ENCODE measurements at regions of chr15 and their contacts with region 1.

Region 1: DNA sequence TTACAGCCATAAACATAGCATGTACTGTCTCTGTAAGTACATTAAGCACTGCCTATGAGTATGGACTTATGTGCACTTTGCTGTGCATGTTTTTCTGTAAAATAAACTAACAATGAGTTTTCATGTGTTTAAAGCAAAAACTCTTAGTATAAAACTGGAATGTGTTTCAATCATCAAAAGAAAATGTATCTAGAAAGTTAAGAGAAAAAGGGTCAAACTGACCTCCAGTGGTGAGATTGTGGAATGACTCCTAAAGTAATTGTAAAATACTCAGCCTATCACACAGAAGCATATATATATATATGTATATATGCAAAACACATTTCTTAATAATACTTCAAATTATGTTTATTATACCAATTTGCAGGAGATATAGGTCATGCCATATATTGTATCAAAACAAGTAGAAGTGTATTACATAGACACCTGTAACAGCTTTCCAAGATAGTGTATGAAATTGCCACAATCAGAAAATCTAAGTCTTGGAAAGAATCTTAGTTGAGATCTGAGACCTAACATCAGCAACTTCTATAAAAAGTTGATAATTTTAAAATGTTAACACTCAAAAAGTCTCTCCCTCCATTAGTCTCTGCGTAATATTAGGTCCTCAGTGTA is 199.6 kb downstream of the FMN1 start:
- DNase-seq: no peak
- H3K4me3 Mint-ChIP-seq: no peak overlapping the region
- H3K27ac Mint-ChIP-seq: no peak overlapping the region
- H3K4me1 Mint-ChIP-seq: no peaks in the 10 kb centered on the region
- H3K27me3 Mint-ChIP-seq: peaks cover 12% of the 10 kb centered on the region

Region 2: DNA sequence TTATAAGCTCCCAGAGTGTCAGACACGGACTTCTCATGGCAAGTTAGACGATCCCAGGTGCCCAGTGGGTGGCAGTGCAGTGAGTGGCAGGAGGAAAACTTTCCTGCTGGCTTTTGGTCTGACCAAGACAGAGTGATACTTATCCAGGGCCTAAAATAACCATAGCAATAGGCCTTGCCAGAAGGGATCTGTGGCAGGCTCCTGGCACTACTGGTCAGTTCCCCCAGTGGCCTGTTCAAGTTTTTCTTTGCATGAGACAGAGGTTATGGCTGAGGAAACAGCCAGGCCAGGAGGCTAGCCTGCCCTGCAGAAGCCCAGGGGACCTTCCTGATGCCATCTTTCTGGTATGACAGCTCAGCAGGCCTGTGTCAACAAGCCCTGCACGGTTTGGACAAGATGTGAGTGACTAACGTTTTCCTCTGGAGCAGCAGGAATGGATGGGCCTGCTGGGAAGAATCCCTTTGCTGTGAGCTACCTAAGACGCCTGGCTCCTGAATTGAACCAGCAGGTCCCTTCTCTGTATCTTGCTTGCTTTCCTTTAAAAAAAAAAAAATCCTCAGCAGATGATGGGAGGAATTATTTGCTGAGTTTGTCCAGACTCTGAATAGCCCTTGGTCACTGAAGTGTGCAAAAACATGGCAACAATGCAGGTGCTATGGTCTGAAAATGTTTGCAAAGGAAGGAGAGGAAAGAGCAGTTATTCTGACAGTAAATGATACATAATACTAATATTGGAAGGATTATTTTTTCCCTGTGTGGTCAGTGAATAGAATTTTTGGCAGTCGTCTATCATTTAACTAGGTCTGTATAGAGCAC is 335.4 kb before region 1 on chr15:
- intact Hi-C with region 1: loop called (anchors 5 kb)
- DNase-seq: no peak
- H3K4me3 Mint-ChIP-seq: no peak overlapping the region
- H3K27ac Mint-ChIP-seq: no peak overlapping the region
- H3K4me1 Mint-ChIP-seq: peaks cover 22% of the 10 kb centered on the region
- H3K27me3 Mint-ChIP-seq: no peaks in the 10 kb centered on the region

Region 3: DNA sequence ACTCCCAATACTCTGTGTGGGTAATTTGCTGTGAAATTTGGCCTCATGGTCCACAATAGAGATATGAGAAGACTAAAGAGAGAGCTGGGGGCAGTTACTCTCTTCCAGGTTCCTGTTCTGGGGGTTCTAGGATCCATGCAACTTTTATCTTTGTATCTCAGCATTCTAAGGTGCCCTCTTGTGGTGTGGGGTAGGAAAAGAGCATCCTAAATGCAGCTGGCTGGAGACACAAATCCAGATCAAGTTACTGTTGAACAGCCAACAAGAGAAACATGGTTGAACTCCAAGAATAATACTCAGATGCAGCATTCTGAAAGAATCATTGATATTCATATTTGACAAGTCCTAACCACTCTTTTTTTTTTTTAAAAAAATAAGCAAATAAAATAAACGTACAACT is 38.9 kb before region 1 on chr15:
- intact Hi-C with region 1: no loop called
- DNase-seq: no peak
- H3K4me3 Mint-ChIP-seq: no peak overlapping the region
- H3K27ac Mint-ChIP-seq: no peak overlapping the region
- H3K4me1 Mint-ChIP-seq: no peaks in the 10 kb centered on the region
- H3K27me3 Mint-ChIP-seq: no peaks in the 10 kb centered on the region

Region 4: DNA sequence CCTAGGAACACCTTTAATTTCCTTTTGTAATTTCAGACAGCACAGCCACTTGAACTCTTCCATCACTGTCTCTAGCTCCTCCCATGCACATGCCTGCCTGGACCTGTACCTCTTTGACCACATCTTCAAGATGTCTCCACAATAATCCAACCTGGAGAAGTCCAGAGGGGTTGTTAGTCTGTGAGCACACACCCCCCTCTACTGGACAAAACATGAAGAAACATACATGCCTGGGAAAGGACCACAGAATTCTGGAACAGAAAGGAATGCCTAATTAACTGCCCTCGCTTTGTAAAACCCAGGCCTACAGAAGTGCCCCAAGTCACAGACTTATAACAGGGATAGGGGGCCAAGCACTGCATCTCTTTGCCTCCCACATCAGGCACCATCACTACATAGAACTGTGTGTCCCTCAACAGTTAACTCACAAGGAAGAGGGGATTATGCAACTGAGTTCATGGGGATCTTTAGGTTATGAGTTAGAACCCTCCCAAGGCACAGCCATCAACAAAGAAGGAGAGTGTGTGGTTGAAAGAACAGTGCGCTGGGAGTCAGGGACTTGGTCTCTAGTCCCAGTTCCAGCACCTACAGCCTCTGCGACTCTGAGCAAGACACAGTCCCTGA is 137.9 kb after region 1 on chr15:
- intact Hi-C with region 1: loop called (anchors 10 kb)
- DNase-seq: no peak
- H3K4me3 Mint-ChIP-seq: no peak overlapping the region
- H3K27ac Mint-ChIP-seq: no peak overlapping the region
- H3K4me1 Mint-ChIP-seq: no peaks in the 10 kb centered on the region
- H3K27me3 Mint-ChIP-seq: no peaks in the 10 kb centered on the region

Measured in activated CD4-positive, alpha-beta T cell treated with anti-CD3 and anti-CD28 coated beads, Interleukin-2, amount 10 ng/mL, durations not matched to agents 24 days and 14 days (primary cell).